ENCODE measurements at regions of chr15 and their contacts with region 1.

Region 1: GRCh38 chr15:95259513-95259912 is 1028.2 kb downstream of the MCTP2 start:
- DNase-seq: peak; percentile 72 to 83
- H3K4me3 ChIP-seq: no peak overlapping the region
- H3K27ac ChIP-seq: peak overlapping the region; percentile 76 to 78
- H3K4me1 ChIP-seq: peaks cover 0 to 69% (median 21%) of the 10 kb centered on the region in 4 donors
- H3K27me3 ChIP-seq: no peaks in the 10 kb centered on the region
- CTCF ChIP-seq: peak; percentile 71 to 86

Region 2: DNA sequence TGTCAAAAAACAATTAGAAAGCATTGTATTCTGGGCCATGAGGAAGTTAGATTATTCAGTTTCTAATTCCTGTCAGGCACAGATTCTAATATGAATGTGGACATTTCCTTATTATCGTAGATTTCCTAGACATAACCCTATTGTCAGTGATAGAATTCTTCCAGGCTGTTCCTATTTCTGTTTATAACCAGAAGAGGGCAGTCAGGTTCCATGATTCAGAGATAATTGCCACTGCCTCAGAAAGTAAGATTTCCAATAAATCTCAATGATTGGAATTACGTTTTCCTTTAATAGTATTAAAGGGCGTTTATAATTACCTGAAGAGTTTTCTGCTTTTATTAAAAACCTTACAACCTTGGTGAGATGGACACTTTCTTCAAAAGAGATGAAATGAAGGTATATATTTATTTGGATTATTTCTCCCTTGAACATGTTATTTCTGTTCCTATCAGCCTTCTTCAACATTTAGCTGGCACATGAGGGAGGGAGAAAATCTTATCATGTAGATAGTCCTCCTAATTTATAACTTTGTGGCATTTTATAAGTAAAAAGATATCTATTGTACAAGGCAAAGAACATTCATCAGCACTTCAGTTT is 589.0 kb before region 1 on chr15:
- intact Hi-C with region 1: loop called (anchors 10 kb)
- DNase-seq: no peak
- H3K4me3 ChIP-seq: no peak overlapping the region
- H3K27ac ChIP-seq: peak overlapping the region in 1 of 2 donors; percentile 57
- H3K4me1 ChIP-seq: peaks cover 0 to 21% (median 11%) of the 10 kb centered on the region in 4 donors
- H3K27me3 ChIP-seq: no peaks in the 10 kb centered on the region
- CTCF ChIP-seq: peak; percentile 74 to 85

Region 3: DNA sequence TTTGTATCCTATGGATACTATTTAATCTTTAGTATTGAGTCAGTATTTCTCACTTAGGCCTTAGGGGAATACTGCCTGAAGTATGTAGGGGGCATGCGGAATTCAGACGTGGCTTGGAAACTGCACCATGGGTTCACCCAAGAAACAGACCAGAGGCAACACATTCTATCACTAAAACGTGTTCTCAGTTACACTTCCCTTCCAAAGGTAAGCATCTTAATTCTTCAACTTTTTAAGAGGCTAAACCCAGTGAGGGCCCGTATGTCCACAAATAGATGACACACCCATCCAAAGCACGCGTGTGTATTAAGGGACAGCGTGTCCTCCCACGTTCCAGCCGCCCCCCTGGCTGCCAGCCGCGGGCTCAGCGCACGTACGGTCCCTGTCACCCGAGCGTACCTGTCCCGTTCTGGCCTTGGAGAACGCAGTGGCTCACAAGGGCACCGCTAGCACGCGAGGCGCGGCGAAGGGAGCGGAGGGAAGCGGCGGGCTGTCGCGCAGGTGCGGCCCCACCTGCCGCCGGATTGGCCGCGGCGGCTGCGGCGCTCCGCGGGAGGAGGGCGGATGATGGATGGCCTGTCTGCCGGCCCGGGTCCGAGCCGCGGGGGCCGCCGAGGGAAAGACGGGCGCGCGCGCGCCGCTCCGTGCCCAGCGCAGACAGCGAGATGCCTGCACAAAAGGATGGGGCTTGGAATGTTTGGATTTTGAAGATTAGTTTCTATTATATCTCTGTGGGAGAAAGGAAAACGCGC is 67.1 kb after region 1 on chr15:
- intact Hi-C with region 1: loop called (anchors 5 kb)
- DNase-seq: peak; percentile 55 to 85
- H3K4me3 ChIP-seq: peak overlapping the region; percentile 61 to 62
- H3K27ac ChIP-seq: peak overlapping the region; percentile 91 to 93
- H3K4me1 ChIP-seq: peaks cover 0 to 49% (median 11%) of the 10 kb centered on the region in 4 donors
- H3K27me3 ChIP-seq: no peaks in the 10 kb centered on the region
- CTCF ChIP-seq: no peak

Region 4: GRCh38 chr15:95409626-95410310 is 150.3 kb after region 1 on chr15:
- intact Hi-C with region 1: loop called (anchors 10 kb)
- DNase-seq: no peak
- H3K4me3 ChIP-seq: no peak overlapping the region
- H3K27ac ChIP-seq: peak overlapping the region; percentile 58 to 82
- H3K4me1 ChIP-seq: peaks cover 0 to 93% (median 11%) of the 10 kb centered on the region in 4 donors
- H3K27me3 ChIP-seq: no peaks in the 10 kb centered on the region
- CTCF ChIP-seq: no peak

Region 5: GRCh38 chr15:95839367-95839782 is 579.9 kb after region 1 on chr15:
- intact Hi-C with region 1: loop called (anchors 10 kb)
- DNase-seq: no peak
- H3K4me3 ChIP-seq: no peak overlapping the region
- H3K27ac ChIP-seq: peak overlapping the region; percentile 68 to 77
- H3K4me1 ChIP-seq: peaks cover 0 to 46% (median 11%) of the 10 kb centered on the region in 4 donors
- H3K27me3 ChIP-seq: no peaks in the 10 kb centered on the region
- CTCF ChIP-seq: no peak

Region 6: DNA sequence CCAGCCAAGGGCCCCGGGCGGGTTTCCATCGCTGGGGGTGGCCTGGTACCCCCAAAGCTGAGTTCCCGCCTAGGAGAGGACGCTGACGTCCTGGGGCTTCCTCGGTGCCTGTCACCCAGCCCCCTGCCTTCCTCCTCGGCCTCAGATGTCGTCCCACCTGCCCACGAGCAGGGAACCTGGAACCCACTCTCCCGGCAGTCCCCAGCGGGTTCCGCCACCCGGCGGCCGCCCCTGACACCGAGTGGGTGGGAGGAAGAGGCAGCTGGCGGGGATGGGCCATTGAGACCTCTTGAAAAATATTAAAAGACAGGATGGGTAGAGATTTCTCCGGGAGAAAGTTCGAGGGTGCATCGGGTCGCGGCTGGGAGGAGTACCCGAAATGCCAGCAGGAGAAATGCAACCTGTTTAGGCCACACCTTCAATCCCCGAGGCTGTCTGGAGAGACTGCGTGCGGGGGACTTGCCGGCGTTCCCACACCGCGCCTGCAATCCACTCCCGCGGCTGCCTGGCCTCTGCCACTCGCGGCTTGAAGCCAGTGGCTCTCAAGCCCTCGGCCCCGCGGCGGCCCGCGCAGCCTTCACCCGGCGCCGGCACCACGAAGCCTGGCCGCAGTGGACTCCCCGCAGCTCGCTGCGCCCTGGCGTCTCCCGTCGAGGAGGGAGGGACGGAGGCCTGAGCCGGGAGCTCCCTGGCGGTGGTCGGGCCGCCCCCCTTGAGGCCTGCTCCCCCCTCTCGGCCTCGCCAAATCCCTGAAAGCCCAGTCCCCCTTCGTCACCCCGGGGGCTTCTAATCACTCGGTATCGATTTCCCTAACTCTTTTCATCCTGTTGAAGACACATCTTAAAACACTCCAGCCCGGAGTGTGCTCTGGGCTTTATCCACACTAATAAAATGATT is 1062.4 kb after region 1 on chr15:
- intact Hi-C with region 1: loop called (anchors 5 kb)
- DNase-seq: peak; percentile 29 to 74
- H3K4me3 ChIP-seq: peak overlapping the region; percentile 92 to 97
- H3K27ac ChIP-seq: peak overlapping the region; percentile 96 to 100
- H3K4me1 ChIP-seq: peaks cover 0 to 43% (median 18%) of the 10 kb centered on the region in 4 donors
- H3K27me3 ChIP-seq: no peaks in the 10 kb centered on the region
- CTCF ChIP-seq: no peak

Measured in tibial artery (tissue), 4 donors.